Endothelial cell of umbilical vein (primary cell): ENCODE measurements at regions of chr2 and their contacts with region 1.

Region 1: GRCh38 chr2:102005989-102006885 is 14.5 kb downstream of the IL1R2 start:
- DNase-seq: peak; percentile 55
- H3K4me3 ChIP-seq: no peak overlapping the region
- H3K27ac ChIP-seq: no peak overlapping the region
- H3K4me1 ChIP-seq: peaks cover 9% of the 10 kb centered on the region
- H3K27me3 ChIP-seq: no peaks in the 10 kb centered on the region
- CTCF ChIP-seq: peak; percentile 66 to 82
- POLR2A ChIP-seq: no peak

Region 2: DNA sequence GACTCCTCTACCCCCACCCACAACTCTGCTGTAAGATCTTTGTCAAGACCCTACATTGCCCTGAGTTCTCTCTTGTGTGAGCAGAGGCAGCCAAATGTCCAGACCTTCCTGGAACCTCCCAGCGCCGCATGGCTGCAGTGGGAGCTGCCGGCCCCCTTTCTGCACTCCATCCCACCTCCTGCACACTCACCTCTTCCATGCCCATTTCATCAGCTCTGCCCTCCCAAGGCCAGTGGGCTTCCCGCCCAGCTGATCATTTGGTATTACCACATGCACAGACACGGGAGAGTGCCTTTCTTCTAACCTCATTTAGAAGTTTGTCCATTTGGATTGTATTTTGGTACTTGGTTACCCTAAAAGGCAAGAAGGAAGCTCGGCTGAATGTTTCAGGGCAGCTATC is 12.5 kb before region 1 on chr2:
- CTCF ChIA-PET with region 1: interaction called, 28 read pairs
- POLR2A ChIA-PET with region 1: interaction called, 3 read pairs
- dilution Hi-C with region 1: no loop called
- intact Hi-C with region 1: no loop called
- DNase-seq: no peak
- H3K4me3 ChIP-seq: no peak overlapping the region
- H3K27ac ChIP-seq: no peak overlapping the region
- H3K4me1 ChIP-seq: no peaks in the 10 kb centered on the region
- H3K27me3 ChIP-seq: peaks cover 17 to 19% of the 10 kb centered on the region in 2 experiments
- CTCF ChIP-seq: no peak
- POLR2A ChIP-seq: no peak

Region 3: DNA sequence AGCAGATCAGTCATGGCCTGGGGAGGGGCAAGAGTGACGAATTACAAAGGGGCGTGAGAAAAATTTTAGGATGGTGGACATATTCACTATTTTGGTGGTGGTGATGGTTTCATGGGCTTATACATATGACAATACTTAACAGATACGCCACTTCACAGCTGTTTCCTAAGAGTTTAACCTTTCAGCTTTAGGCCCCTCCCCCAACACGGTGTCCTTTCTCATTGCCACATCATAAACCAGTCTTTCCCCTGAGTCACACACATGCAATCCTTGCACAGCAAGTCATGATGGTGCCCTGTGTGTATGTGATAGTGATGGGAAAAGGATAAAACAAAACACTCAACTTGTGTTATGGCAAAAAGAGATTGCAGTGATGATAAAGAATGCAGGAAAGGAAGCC is 88.7 kb after region 1 on chr2:
- CTCF ChIA-PET with region 1: no interaction called
- POLR2A ChIA-PET with region 1: no interaction called
- dilution Hi-C with region 1: no loop called
- intact Hi-C with region 1: no loop called
- DNase-seq: peak; percentile 72
- H3K4me3 ChIP-seq: no peak overlapping the region
- H3K27ac ChIP-seq: no peak overlapping the region
- H3K4me1 ChIP-seq: peaks cover 7% of the 10 kb centered on the region
- H3K27me3 ChIP-seq: no peaks in the 10 kb centered on the region
- CTCF ChIP-seq: no peak
- POLR2A ChIP-seq: no peak

Region 4: DNA sequence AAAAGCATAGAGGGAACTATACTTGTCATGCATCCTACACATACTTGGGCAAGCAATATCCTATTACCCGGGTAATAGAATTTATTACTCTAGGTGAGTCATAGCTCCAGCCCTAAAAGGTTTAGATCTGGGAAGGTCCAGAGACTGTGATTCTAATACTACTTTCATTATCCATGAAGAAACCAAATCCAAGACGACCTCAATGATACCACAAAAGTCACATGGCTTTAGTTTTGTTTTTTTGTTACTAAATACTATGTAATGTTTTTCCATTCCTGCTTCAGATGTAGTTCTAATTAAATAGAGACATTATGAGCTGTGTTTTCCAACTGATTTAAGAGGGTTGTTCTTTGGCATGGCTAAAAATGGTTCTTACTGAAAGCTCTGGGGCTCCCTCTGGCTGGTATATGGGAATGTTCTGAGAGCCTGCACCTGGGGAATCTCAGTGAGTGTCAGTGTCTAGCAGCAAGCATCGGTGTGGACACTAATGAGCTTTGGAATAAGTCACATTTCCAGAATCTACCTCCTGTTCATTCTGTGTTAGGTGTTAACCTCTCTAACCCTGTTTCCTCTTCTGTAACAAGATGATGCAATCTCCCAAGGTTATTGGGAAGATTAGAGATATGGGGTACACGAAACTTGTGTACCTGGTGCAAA is 160.1 kb after region 1 on chr2:
- CTCF ChIA-PET with region 1: interaction called, 38 read pairs
- POLR2A ChIA-PET with region 1: no interaction called
- dilution Hi-C with region 1: no loop called
- intact Hi-C with region 1: no loop called
- DNase-seq: peak; percentile 59
- H3K4me3 ChIP-seq: no peak overlapping the region
- H3K27ac ChIP-seq: no peak overlapping the region
- H3K4me1 ChIP-seq: no peaks in the 10 kb centered on the region
- H3K27me3 ChIP-seq: no peaks in the 10 kb centered on the region
- CTCF ChIP-seq: peak in 1 of 2 donors; percentile 46
- POLR2A ChIP-seq: no peak

Region 5: GRCh38 chr2:102235491-102235890 is 229.3 kb after region 1 on chr2:
- CTCF ChIA-PET with region 1: interaction called, 172 read pairs
- POLR2A ChIA-PET with region 1: interaction called, 6 read pairs
- dilution Hi-C with region 1: no loop called
- intact Hi-C with region 1: no loop called
- DNase-seq: peak; percentile 40
- H3K4me3 ChIP-seq: no peak overlapping the region
- H3K27ac ChIP-seq: no peak overlapping the region
- H3K4me1 ChIP-seq: peaks cover 6% of the 10 kb centered on the region
- H3K27me3 ChIP-seq: no peaks in the 10 kb centered on the region
- CTCF ChIP-seq: peak; percentile 36 to 67
- POLR2A ChIP-seq: no peak

Region 6: GRCh38 chr2:102278720-102279390 is 272.6 kb after region 1 on chr2:
- CTCF ChIA-PET with region 1: no interaction called
- POLR2A ChIA-PET with region 1: no interaction called
- dilution Hi-C with region 1: no loop called
- intact Hi-C with region 1: no loop called
- DNase-seq: no peak
- H3K4me3 ChIP-seq: no peak overlapping the region
- H3K27ac ChIP-seq: no peak overlapping the region
- H3K4me1 ChIP-seq: peaks cover 2% of the 10 kb centered on the region
- H3K27me3 ChIP-seq: peaks cover 0 to 2% of the 10 kb centered on the region in 2 experiments
- CTCF ChIP-seq: no peak
- POLR2A ChIP-seq: no peak

Region 7: DNA sequence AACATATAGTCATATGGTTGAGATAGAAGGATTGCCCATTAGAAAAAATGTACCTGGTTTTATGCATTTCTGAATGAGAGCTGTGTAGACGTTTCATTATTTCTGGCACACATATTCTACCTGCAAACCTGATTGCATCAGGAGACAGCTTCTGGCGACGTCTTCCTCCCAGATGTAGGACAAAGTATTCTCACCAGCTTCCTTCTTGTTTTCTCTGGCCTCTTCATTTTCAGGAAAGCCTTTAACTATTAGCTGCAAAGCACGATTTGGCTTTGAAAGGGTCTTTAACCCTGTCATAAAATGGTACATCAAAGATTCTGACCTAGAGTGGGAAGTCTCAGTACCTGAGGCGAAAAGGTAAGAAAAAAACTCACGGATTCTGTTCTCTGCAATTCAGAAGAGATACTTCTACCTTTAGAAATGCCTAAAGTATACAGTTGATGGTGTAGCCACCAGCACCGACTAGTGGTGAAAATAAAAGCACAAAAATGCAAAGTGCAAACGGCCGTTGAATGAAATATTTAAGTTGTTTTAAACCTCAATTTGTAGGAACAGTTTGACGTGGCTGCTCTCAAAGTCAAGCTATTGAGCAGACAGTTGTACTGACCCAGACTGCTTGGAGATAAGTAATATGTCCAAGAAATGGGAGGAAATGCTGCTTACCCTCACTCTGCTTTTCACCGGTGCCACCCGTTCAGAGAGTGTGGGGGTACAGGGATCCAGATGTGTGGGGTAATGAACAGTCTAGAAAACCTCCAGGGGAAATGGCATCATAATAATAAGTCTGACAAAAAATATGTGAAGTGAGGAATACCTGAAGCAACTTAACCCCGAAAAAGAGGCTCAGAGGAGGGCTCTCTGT is 437.0 kb after region 1 on chr2:
- CTCF ChIA-PET with region 1: interaction called, 38 read pairs
- POLR2A ChIA-PET with region 1: no interaction called
- dilution Hi-C with region 1: no loop called
- intact Hi-C with region 1: loop called (anchors 1 kb)
- DNase-seq: peak; percentile 64
- H3K4me3 ChIP-seq: no peak overlapping the region
- H3K27ac ChIP-seq: no peak overlapping the region
- H3K4me1 ChIP-seq: no peaks in the 10 kb centered on the region
- H3K27me3 ChIP-seq: no peaks in the 10 kb centered on the region
- CTCF ChIP-seq: peak; percentile 56 to 62
- POLR2A ChIP-seq: no peak

Region 8: GRCh38 chr2:102449370-102449974 is 443.2 kb after region 1 on chr2:
- CTCF ChIA-PET with region 1: interaction called, 38 read pairs
- POLR2A ChIA-PET with region 1: no interaction called
- dilution Hi-C with region 1: no loop called
- intact Hi-C with region 1: loop called (anchors 1 kb)
- DNase-seq: peak; percentile 67
- H3K4me3 ChIP-seq: no peak overlapping the region
- H3K27ac ChIP-seq: no peak overlapping the region
- H3K4me1 ChIP-seq: no peaks in the 10 kb centered on the region
- H3K27me3 ChIP-seq: peaks cover 0 to 5% of the 10 kb centered on the region in 2 experiments
- CTCF ChIP-seq: peak; percentile 53 to 58
- POLR2A ChIP-seq: no peak

Region 9: GRCh38 chr2:103959174-103960128 is 1953.2 kb after region 1 on chr2:
- CTCF ChIA-PET with region 1: no interaction called
- POLR2A ChIA-PET with region 1: no interaction called
- dilution Hi-C with region 1: no loop called
- intact Hi-C with region 1: no loop called
- DNase-seq: no peak
- H3K4me3 ChIP-seq: no peak overlapping the region
- H3K27ac ChIP-seq: no peak overlapping the region
- H3K4me1 ChIP-seq: no peaks in the 10 kb centered on the region
- H3K27me3 ChIP-seq: no peaks in the 10 kb centered on the region
- CTCF ChIP-seq: no peak
- POLR2A ChIP-seq: no peak